ENCODE measurements at regions of chr19 and their contacts with region 1.

Region 1: DNA sequence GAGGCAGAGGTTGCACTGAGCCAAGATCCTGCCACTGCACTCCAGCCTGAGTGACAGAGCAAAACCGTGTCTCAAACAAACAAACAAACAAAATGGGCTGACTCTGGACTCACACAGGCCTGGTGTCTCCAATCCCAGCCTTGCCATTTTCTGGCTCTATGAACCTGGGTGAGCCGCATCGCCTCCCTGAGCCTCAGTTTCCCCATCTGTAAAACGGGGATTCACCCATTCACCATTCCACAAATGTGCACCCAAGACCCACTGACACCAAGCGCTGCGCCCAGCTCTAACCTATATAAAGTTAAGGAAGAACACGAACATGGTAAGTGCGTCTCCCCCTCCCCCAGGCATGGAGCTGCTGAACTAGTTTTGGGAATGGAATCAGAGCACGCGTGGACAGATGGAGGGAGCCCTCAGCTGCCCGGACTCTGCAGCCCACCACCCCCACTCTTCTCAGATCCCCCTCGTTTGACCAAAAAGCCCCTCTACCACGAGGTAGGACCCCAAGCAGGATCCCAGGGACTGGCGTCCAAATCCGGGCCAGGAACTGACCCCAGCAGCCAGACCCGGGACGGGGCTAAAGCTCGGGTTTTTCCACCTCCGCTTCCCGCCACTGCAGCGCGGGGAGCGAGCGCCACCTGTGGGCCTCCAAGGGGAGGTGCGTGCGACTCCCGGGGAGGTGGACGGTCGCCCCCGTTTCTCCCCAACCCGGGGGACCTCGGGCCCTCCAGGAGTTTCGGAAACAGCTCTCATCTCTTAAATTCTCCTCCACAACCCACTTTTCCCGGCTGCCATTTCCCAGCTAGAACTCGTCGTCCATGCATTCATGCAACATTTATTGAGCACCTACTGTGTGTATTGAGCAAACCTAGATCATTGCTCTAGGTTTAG is 33.0 kb upstream of the ADGRE5 start:
- DNase-seq: peak; percentile 73
- ATAC-seq: peak; percentile 77
- H3K4me3 ChIP-seq: peak overlapping the region in 3 of 5 experiments; percentile 27 to 34 (median 34)
- H3K4me3 Mint-ChIP-seq: peak overlapping the region; percentile 27
- H3K27ac ChIP-seq: no peak overlapping the region
- H3K27ac Mint-ChIP-seq: no peak overlapping the region
- H3K4me1 ChIP-seq: peaks cover 21 to 24% of the 10 kb centered on the region in 2 donors
- H3K4me1 Mint-ChIP-seq: peaks cover 22% of the 10 kb centered on the region
- H3K27me3 ChIP-seq: no peaks in the 10 kb centered on the region
- H3K27me3 Mint-ChIP-seq: no peaks in the 10 kb centered on the region
- CTCF ChIP-seq: peak; percentile 89

Region 2: DNA sequence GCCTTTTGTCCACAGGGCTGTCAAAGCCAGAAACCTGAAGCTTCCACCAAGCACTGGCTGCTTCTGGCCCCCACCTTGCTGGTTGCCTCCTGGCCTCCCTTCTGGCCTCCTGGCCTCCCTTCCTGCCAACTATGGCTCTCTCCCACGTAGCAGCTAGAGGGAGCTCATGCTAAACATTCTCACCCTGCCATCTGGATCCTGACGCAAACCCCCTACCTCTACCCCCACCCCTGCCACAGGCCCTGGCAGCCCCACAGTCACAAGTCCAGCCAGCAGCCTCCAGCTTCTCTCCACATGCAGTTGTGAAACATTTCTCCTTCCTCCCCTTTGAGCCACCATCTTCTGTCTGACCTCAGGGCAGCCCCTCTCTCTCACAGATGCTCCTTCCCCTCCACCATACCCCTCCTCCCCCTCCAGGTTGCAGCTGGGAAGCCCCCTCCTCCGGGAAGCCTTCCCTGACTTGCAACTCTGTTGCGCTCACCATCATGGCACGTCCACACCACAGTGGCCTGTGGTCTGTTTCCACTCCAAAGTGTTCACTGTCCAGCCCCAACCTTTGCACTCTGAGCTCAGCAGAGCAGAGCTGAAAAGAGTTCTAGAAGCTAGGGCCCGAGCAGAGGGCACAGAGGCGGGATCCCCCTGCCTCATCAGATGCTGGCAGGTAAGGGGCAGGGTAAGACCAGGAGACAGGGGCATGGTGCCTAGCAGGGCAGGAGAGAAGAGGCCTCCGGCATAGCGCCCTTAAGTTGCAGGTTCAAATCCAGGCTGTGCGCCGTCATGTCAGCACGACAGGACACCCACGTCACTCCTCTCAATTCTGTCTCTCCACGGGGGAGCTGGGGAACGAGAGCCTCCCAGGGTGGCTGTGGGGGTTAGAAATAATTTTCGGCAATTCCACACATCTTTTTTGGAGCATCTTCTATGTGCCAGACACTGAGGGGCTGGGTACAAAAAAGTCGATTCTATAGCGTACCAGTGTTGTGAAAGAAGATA is 149.6 kb before region 1 on chr19:
- CTCF ChIA-PET with region 1: interaction called, 63 read pairs
- POLR2A ChIA-PET with region 1: no interaction called
- intact Hi-C with region 1: loop called (anchors 1 kb)
- DNase-seq: no peak
- ATAC-seq: no peak
- H3K4me3 ChIP-seq: no peak overlapping the region
- H3K4me3 Mint-ChIP-seq: no peak overlapping the region
- H3K27ac ChIP-seq: no peak overlapping the region
- H3K27ac Mint-ChIP-seq: no peak overlapping the region
- H3K4me1 ChIP-seq: peaks cover 0 to 3% of the 10 kb centered on the region in 2 donors
- H3K4me1 Mint-ChIP-seq: peaks cover 8% of the 10 kb centered on the region
- H3K27me3 ChIP-seq: peaks cover 0 to 6% (median 0%) of the 10 kb centered on the region in 4 experiments
- H3K27me3 Mint-ChIP-seq: peaks cover 17% of the 10 kb centered on the region
- CTCF ChIP-seq: no peak

Region 3: GRCh38 chr19:14320253-14320652 is 28.0 kb before region 1 on chr19:
- CTCF ChIA-PET with region 1: interaction called, 10 read pairs
- POLR2A ChIA-PET with region 1: no interaction called
- intact Hi-C with region 1: no loop called
- DNase-seq: no peak
- ATAC-seq: no peak
- H3K4me3 ChIP-seq: no peak overlapping the region
- H3K4me3 Mint-ChIP-seq: no peak overlapping the region
- H3K27ac ChIP-seq: no peak overlapping the region
- H3K27ac Mint-ChIP-seq: no peak overlapping the region
- H3K4me1 ChIP-seq: no peaks in the 10 kb centered on the region
- H3K4me1 Mint-ChIP-seq: no peaks in the 10 kb centered on the region
- H3K27me3 ChIP-seq: no peaks in the 10 kb centered on the region
- H3K27me3 Mint-ChIP-seq: no peaks in the 10 kb centered on the region
- CTCF ChIP-seq: no peak

Region 4: DNA sequence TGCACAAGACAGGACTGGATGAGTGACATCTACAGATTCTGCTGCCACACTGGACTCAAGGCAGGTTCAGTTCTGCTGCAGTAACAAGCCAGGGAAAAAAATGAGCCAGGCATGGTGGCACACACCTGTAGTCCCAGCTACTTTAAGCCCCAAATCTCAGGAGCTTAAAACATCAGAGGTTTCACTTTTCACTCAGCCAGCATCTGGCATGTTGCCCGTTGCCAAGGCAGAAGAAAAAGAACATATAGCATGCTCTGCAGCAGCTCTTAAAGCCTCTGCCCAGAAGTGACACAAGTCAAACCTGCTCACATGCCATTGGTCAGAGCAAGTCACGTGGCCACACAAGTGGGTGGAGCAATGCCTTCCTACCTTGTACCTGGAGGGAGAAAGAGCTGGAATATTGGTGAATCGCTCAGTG is 18.3 kb after region 1 on chr19:
- CTCF ChIA-PET with region 1: interaction called, 10 read pairs
- POLR2A ChIA-PET with region 1: interaction called, 9 read pairs
- intact Hi-C with region 1: no loop called
- DNase-seq: peak; percentile 91
- ATAC-seq: peak; percentile 47
- H3K4me3 ChIP-seq: no peak overlapping the region
- H3K4me3 Mint-ChIP-seq: peak overlapping the region; percentile 40
- H3K27ac ChIP-seq: peak overlapping the region; percentile 63 to 100
- H3K27ac Mint-ChIP-seq: peak overlapping the region; percentile 87
- H3K4me1 ChIP-seq: peaks cover 67 to 80% of the 10 kb centered on the region in 2 donors
- H3K4me1 Mint-ChIP-seq: peaks cover 61% of the 10 kb centered on the region
- H3K27me3 ChIP-seq: no peaks in the 10 kb centered on the region
- H3K27me3 Mint-ChIP-seq: no peaks in the 10 kb centered on the region
- CTCF ChIP-seq: no peak

Region 5: GRCh38 chr19:14405758-14406644 is 57.8 kb after region 1 on chr19:
- CTCF ChIA-PET with region 1: interaction called, 49 read pairs
- POLR2A ChIA-PET with region 1: interaction called, 4 read pairs
- intact Hi-C with region 1: no loop called
- DNase-seq: peak; percentile 93
- ATAC-seq: peak; percentile 89
- H3K4me3 ChIP-seq: peak overlapping the region in 3 of 5 experiments; percentile 11 to 36 (median 11)
- H3K4me3 Mint-ChIP-seq: peak overlapping the region; percentile 59
- H3K27ac ChIP-seq: peak overlapping the region in 1 of 2 donors; percentile 11
- H3K27ac Mint-ChIP-seq: peak overlapping the region; percentile 88
- H3K4me1 ChIP-seq: peaks cover 7 to 34% of the 10 kb centered on the region in 2 donors
- H3K4me1 Mint-ChIP-seq: peaks cover 41% of the 10 kb centered on the region
- H3K27me3 ChIP-seq: no peaks in the 10 kb centered on the region
- H3K27me3 Mint-ChIP-seq: no peaks in the 10 kb centered on the region
- CTCF ChIP-seq: peak; percentile 87

Region 6: GRCh38 chr19:14496028-14496833 is 148.0 kb after region 1 on chr19 and contains the start of gene GIPC1:
- CTCF ChIA-PET with region 1: no interaction called
- POLR2A ChIA-PET with region 1: no interaction called
- intact Hi-C with region 1: no loop called
- DNase-seq: peak; percentile 89
- ATAC-seq: peak; percentile 90
- H3K4me3 ChIP-seq: peak within 1 kb of the TSS in 4 of 5 experiments; percentile 62 to 69 (median 62)
- H3K4me3 Mint-ChIP-seq: peak within 1 kb of the TSS; percentile 86
- H3K27ac ChIP-seq: peak within 1 kb of the TSS in 1 of 2 donors; percentile 24
- H3K27ac Mint-ChIP-seq: peak within 1 kb of the TSS; percentile 78
- H3K4me1 ChIP-seq: peaks cover 6 to 16% of the 10 kb centered on the region in 2 donors
- H3K4me1 Mint-ChIP-seq: peaks cover 14% of the 10 kb centered on the region
- H3K27me3 ChIP-seq: no peaks in the 10 kb centered on the region
- H3K27me3 Mint-ChIP-seq: no peaks in the 10 kb centered on the region
- CTCF ChIP-seq: no peak
- total RNA-seq, gene GIPC1: 10.7 and 12.0 TPM in 2 replicates